Spleen (tissue), 13 donors: ENCODE measurements at regions of chr10 and their contacts with region 1.

Region 1: GRCh38 chr10:93916257-93917063 is 22.7 kb downstream of the SLC35G1 start:
- DNase-seq: no peak
- H3K4me3 ChIP-seq: no peak overlapping the region
- H3K27ac ChIP-seq: peak overlapping the region in 2 of 8 donors; percentile 14 to 44
- H3K4me1 ChIP-seq: peaks cover 0 to 11% (median 4%) of the 10 kb centered on the region in 6 donors
- H3K27me3 ChIP-seq: no peaks in the 10 kb centered on the region
- CTCF ChIP-seq: peak in 9 of 11 experiments; percentile 20 to 59 (median 52)
- POLR2A ChIP-seq: no peak

Region 2: DNA sequence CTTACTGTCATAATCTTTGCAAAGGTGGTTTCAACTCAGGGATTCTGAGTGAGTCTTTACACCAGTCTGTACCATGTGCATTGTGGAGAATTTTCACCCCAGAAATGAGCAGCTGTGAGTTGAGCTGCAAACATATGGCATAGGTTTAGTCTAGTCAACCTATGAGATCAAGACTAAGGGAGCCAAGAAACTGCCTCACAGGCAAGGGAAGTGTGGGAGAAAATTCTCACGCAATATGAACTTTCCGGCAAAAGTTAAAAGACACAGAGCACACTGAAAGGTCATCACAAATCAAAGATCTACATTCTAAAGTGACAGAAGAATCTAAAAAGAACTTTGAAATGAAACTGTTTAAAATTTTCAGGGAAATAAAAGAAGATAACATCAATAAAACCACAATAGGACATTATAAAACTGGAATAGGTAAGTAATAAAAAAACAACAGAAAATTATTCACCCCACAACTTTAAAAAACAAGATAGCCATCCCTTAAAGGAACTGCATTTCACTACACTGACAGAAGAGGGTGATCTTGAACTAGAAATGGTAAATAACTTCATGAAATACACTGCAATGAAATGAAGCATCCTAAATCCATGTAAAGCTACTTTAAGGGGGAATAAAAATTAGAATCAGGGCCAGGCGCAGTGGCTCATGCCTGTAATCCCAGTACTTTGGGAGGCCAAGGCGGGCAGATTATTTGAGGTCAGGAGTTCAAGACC is 95.2 kb before region 1 on chr10:
- intact Hi-C with region 1: no loop called
- DNase-seq: no peak
- H3K4me3 ChIP-seq: no peak overlapping the region
- H3K27ac ChIP-seq: no peak overlapping the region
- H3K4me1 ChIP-seq: peaks cover 0 to 3% (median 0%) of the 10 kb centered on the region in 6 donors
- H3K27me3 ChIP-seq: peaks cover 0 to 25% (median 0%) of the 10 kb centered on the region in 7 donors
- CTCF ChIP-seq: peak in 8 of 11 experiments; percentile 17 to 51 (median 40)
- POLR2A ChIP-seq: no peak

Region 3: GRCh38 chr10:94108200-94108599 is 191.7 kb after region 1 on chr10:
- intact Hi-C with region 1: no loop called
- DNase-seq: no peak
- H3K4me3 ChIP-seq: no peak overlapping the region
- H3K27ac ChIP-seq: peak overlapping the region in 2 of 8 donors; percentile 37 to 46
- H3K4me1 ChIP-seq: peaks cover 0 to 19% (median 9%) of the 10 kb centered on the region in 6 donors
- H3K27me3 ChIP-seq: no peaks in the 10 kb centered on the region
- CTCF ChIP-seq: no peak
- POLR2A ChIP-seq: no peak

Region 4: GRCh38 chr10:94320285-94320914 is 403.9 kb after region 1 on chr10:
- intact Hi-C with region 1: loop called (anchors 10 kb)
- DNase-seq: peak; percentile 83
- H3K4me3 ChIP-seq: no peak overlapping the region
- H3K27ac ChIP-seq: no peak overlapping the region
- H3K4me1 ChIP-seq: peaks cover 0 to 8% (median 0%) of the 10 kb centered on the region in 6 donors
- H3K27me3 ChIP-seq: no peaks in the 10 kb centered on the region
- CTCF ChIP-seq: peak; percentile 31 to 83 (median 63)
- POLR2A ChIP-seq: no peak

Region 5: DNA sequence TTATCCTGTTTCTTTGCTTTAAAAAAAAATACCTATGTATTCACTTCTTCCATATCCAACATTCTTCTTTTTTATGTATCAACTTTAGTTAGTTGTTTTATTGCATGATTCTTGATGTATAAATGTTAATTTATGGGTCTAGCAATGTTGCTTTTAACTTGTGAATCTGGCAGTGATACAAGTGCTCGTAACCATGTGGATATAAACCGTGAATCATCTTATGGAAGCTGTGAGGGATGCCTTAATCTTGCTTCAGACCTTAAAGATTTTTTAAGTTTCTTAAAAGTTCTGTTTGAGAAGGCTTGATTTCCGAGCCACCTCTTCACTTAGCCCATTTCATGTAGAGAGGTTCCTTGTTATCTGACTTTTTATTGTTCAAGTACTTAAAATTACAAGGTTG is 655.1 kb after region 1 on chr10:
- intact Hi-C with region 1: no loop called
- DNase-seq: no peak
- H3K4me3 ChIP-seq: no peak overlapping the region
- H3K27ac ChIP-seq: no peak overlapping the region
- H3K4me1 ChIP-seq: no peaks in the 10 kb centered on the region
- H3K27me3 ChIP-seq: no peaks in the 10 kb centered on the region
- CTCF ChIP-seq: no peak
- POLR2A ChIP-seq: no peak